Esophagus squamous epithelium (tissue), 5 donors: ENCODE measurements at regions of chr12 and their contacts with region 1.

Region 1: GRCh38 chr12:56450241-56450640 is 1.0 kb upstream of the TIMELESS start:
- DNase-seq: no peak
- H3K4me3 ChIP-seq: no peak overlapping the region
- H3K27ac ChIP-seq: peak overlapping the region in 1 of 4 donors; percentile 95
- H3K4me1 ChIP-seq: peaks cover 7 to 15% (median 11%) of the 10 kb centered on the region in 3 donors
- H3K27me3 ChIP-seq: no peaks in the 10 kb centered on the region
- CTCF ChIP-seq: no peak
- POLR2A ChIP-seq: no peak

Region 2: GRCh38 chr12:56321027-56321426 is 129.2 kb before region 1 on chr12:
- intact Hi-C with region 1: loop called (anchors 10 kb)
- DNase-seq: no peak
- H3K4me3 ChIP-seq: no peak overlapping the region
- H3K27ac ChIP-seq: no peak overlapping the region
- H3K4me1 ChIP-seq: peaks cover 5 to 9% (median 6%) of the 10 kb centered on the region in 3 donors
- H3K27me3 ChIP-seq: no peaks in the 10 kb centered on the region
- CTCF ChIP-seq: no peak
- POLR2A ChIP-seq: no peak